CD4-positive, alpha-beta T cell (primary cell): ENCODE measurements at regions of chr11 and their contacts with region 1.

Region 1: GRCh38 chr11:798093-798713 is at the start of gene SLC25A22:
- DNase-seq: peak; percentile 62 to 94 (median 81)
- ATAC-seq: peak; percentile 61
- H3K4me3 ChIP-seq: peak within 1 kb of the TSS; percentile 89
- H3K4me3 Mint-ChIP-seq: peak within 1 kb of the TSS; percentile 92
- H3K27ac ChIP-seq: peak within 1 kb of the TSS; percentile 69 to 91
- H3K27ac Mint-ChIP-seq: peak within 1 kb of the TSS; percentile 91
- H3K4me1 ChIP-seq: peaks cover 60% of the 10 kb centered on the region
- H3K4me1 Mint-ChIP-seq: peaks cover 16% of the 10 kb centered on the region
- H3K27me3 ChIP-seq: no peaks in the 10 kb centered on the region
- H3K27me3 Mint-ChIP-seq: no peaks in the 10 kb centered on the region
- CTCF ChIP-seq: peak; percentile 66
- total RNA-seq, gene SLC25A22: 9.1 to 11.1 TPM

Region 2: GRCh38 chr11:535519-536454 is 262.4 kb before region 1 on chr11 and contains the start of gene HRAS:
- CTCF ChIA-PET with region 1: no interaction called
- POLR2A ChIA-PET with region 1: no interaction called
- intact Hi-C with region 1: loop called in 1 of 2 experiments (anchors 5 kb)
- DNase-seq: peak; percentile 89 to 99 (median 96)
- ATAC-seq: peak; percentile 90
- H3K4me3 ChIP-seq: peak within 1 kb of the TSS; percentile 71
- H3K4me3 Mint-ChIP-seq: peak within 1 kb of the TSS; percentile 98
- H3K27ac ChIP-seq: peak within 1 kb of the TSS; percentile 73 to 79
- H3K27ac Mint-ChIP-seq: peak within 1 kb of the TSS; percentile 93
- H3K4me1 ChIP-seq: peaks cover 44% of the 10 kb centered on the region
- H3K4me1 Mint-ChIP-seq: peaks cover 16% of the 10 kb centered on the region
- H3K27me3 ChIP-seq: no peaks in the 10 kb centered on the region
- H3K27me3 Mint-ChIP-seq: no peaks in the 10 kb centered on the region
- CTCF ChIP-seq: no peak
- total RNA-seq, gene HRAS: 23.7 to 23.9 TPM

Region 3: DNA sequence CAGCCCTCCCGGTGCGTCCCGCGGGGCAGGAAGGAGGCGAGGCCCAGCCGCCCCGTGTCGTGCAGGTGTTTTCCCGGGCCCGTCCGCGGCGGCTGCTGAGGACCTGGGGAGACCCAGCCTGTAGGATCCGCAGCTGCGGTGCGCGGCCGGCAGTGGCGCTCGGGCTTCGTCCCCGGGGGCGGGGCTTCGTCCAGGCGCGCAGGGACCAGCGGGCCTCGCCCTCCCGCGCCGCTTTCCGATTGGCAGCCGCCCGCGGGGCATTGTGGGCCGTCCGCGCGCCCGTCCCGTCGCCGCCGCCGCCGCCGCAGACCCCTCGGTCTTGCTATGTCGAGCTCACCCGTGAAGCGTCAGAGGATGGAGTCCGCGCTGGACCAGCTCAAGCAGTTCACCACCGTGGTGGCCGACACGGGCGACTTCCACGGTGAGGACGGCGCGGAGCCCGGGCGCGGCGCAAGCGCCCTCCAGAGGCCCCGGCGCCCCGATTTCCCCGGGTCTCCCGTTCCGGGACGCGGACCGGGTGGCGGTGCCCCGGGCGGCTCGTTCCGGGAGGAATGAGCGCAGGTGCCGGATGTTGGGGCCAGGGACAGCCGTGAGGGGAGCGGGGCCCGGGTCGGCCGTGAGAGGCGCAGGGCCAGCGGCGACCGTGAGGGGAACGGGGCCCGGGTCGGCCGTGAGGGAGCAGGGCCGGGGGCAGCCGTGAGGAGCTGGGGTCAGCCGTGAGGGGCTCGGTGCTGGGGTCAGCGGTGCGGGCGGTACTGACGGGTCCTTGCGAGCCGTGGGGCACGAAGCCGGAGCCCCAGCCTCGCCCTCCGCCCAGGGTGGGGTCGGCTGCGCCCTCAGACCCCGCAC is 50.8 kb before region 1 on chr11 and contains the start of gene TALDO1:
- CTCF ChIA-PET with region 1: interaction called, 4 read pairs
- POLR2A ChIA-PET with region 1: no interaction called
- intact Hi-C with region 1: loop called (anchors 5 kb)
- DNase-seq: peak; percentile 39 to 91 (median 75)
- ATAC-seq: peak; percentile 79
- H3K4me3 ChIP-seq: peak within 1 kb of the TSS; percentile 63
- H3K4me3 Mint-ChIP-seq: peak within 1 kb of the TSS; percentile 91
- H3K27ac ChIP-seq: peak within 1 kb of the TSS in 1 of 2 donors; percentile 46
- H3K27ac Mint-ChIP-seq: peak within 1 kb of the TSS; percentile 78
- H3K4me1 ChIP-seq: peaks cover 23% of the 10 kb centered on the region
- H3K4me1 Mint-ChIP-seq: peaks cover 18% of the 10 kb centered on the region
- H3K27me3 ChIP-seq: no peaks in the 10 kb centered on the region
- H3K27me3 Mint-ChIP-seq: no peaks in the 10 kb centered on the region
- CTCF ChIP-seq: peak; percentile 23
- total RNA-seq, gene TALDO1: 26.2 to 27.7 TPM

Region 4: DNA sequence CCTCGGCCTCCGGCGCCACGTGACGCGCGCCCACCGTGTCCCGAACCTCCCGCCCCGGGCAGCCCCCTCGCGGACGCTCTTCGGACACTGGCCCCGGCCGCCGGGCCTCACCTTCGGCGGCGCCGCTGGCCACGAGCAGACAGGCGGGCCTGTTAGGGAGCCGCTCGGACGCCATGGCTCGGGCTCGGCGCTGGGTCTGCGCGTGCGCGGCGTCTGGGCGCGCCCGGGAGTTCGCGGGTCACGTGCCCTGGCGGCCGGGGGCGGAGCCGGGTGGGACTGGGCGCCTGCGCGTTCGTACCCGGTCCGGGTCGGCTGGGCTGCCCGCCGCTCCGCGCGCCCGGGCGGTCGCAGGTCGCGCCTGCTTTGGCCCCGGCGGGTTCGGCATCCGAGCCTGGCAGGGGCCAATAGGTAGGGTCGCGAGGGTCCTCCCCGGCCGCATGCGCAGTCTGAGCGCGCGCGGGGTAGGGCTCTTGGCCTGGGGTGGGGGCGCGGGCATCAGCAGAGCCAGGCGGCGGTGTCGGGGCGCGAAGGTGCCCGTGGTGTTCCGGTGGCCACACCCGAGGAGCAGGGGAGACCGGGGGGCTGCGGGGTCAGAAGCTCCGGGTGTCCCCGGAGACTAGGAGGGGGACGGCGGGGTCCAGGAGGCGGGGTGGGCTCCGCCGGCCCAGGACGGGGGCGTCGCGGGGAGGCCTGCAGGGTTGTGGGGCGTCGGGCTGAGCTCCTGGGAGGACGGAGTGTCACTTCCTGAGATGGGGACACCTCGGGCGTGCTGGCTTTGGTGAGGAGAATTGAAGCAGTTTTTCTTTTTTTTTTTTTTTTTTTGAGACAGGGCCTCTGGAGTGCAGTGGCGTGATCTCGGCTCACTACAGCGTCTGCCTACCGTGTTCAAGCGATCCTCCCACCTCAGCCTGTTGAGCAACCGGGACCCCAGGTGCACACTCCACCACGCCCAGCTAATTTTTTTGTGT is 20.6 kb before region 1 on chr11 and contains the start of gene GATD1:
- CTCF ChIA-PET with region 1: no interaction called
- POLR2A ChIA-PET with region 1: interaction called, 6 read pairs
- intact Hi-C with region 1: loop called (anchors 2 kb)
- DNase-seq: peak; percentile 85 to 96 (median 93)
- ATAC-seq: peak; percentile 87
- H3K4me3 ChIP-seq: peak within 1 kb of the TSS; percentile 67
- H3K4me3 Mint-ChIP-seq: peak within 1 kb of the TSS; percentile 90
- H3K27ac ChIP-seq: peak within 1 kb of the TSS in 1 of 2 donors; percentile 56
- H3K27ac Mint-ChIP-seq: peak within 1 kb of the TSS; percentile 77
- H3K4me1 ChIP-seq: peaks cover 48% of the 10 kb centered on the region
- H3K4me1 Mint-ChIP-seq: peaks cover 11% of the 10 kb centered on the region
- H3K27me3 ChIP-seq: no peaks in the 10 kb centered on the region
- H3K27me3 Mint-ChIP-seq: no peaks in the 10 kb centered on the region
- CTCF ChIP-seq: no peak
- total RNA-seq, gene GATD1: 14.7 to 16.1 TPM

Region 5: GRCh38 chr11:809287-810039 is 11.3 kb after region 1 on chr11 and contains the start of gene RPLP2:
- CTCF ChIA-PET with region 1: no interaction called
- POLR2A ChIA-PET with region 1: interaction called, 24 read pairs
- intact Hi-C with region 1: loop called in 1 of 2 experiments (anchors 1 kb)
- DNase-seq: peak; percentile 93 to 99 (median 97)
- ATAC-seq: peak; percentile 82
- H3K4me3 ChIP-seq: peak within 1 kb of the TSS; percentile 92
- H3K4me3 Mint-ChIP-seq: peak within 1 kb of the TSS; percentile 95
- H3K27ac ChIP-seq: peak within 1 kb of the TSS; percentile 95 to 99
- H3K27ac Mint-ChIP-seq: peak within 1 kb of the TSS; percentile 99
- H3K4me1 ChIP-seq: peaks cover 42% of the 10 kb centered on the region
- H3K4me1 Mint-ChIP-seq: peaks cover 35% of the 10 kb centered on the region
- H3K27me3 ChIP-seq: no peaks in the 10 kb centered on the region
- H3K27me3 Mint-ChIP-seq: no peaks in the 10 kb centered on the region
- CTCF ChIP-seq: no peak
- total RNA-seq, gene RPLP2: 5,234 to 5,390 TPM

Region 6: DNA sequence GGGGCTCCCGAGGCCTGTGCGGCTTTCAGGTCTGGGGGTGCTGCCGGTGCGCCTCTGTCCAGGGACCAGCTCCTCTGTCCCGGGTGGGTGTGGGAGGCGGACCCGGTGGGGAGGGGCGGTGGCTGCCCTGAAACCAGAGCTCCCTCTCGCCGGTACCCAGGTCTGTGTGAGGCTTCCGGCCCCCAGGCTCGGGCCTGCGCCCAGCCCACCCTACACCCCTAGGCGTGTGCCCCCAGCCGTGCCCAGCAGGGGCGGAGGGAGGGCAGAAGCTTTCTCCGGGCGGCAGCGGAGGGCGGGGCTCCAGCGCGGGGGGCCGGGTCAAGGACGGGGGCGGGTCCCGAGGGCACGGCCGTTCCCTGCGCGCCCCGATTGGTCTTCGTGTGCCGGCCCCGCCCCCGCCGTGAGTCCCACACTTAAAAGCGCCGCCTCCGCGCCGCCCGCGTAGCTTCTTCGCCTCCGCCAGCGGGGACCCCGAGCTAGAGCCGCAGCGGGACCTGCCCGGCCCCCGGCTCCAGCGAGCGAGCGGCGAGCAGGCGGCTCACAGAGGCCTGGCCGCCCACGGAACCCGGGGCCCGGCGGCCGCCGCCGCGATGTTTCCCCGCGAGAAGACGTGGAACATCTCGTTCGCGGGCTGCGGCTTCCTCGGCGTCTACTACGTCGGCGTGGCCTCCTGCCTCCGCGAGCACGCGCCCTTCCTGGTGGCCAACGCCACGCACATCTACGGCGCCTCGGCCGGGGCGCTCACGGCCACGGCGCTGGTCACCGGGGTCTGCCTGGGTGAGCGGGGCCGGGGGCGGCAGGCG is 21.1 kb after region 1 on chr11:
- CTCF ChIA-PET with region 1: no interaction called
- POLR2A ChIA-PET with region 1: interaction called, 31 read pairs
- intact Hi-C with region 1: no loop called
- DNase-seq: peak; percentile 83 to 96 (median 92)
- ATAC-seq: peak; percentile 71
- H3K4me3 ChIP-seq: peak overlapping the region; percentile 74
- H3K4me3 Mint-ChIP-seq: peak overlapping the region; percentile 97
- H3K27ac ChIP-seq: peak overlapping the region; percentile 62 to 88
- H3K27ac Mint-ChIP-seq: peak overlapping the region; percentile 92
- H3K4me1 ChIP-seq: peaks cover 34% of the 10 kb centered on the region
- H3K4me1 Mint-ChIP-seq: peaks cover 11% of the 10 kb centered on the region
- H3K27me3 ChIP-seq: no peaks in the 10 kb centered on the region
- H3K27me3 Mint-ChIP-seq: no peaks in the 10 kb centered on the region
- CTCF ChIP-seq: peak; percentile 21

Region 7: GRCh38 chr11:1502954-1503707 is 704.9 kb after region 1 on chr11:
- CTCF ChIA-PET with region 1: no interaction called
- POLR2A ChIA-PET with region 1: no interaction called
- intact Hi-C with region 1: no loop called
- DNase-seq: no peak
- ATAC-seq: no peak
- H3K4me3 ChIP-seq: no peak overlapping the region
- H3K4me3 Mint-ChIP-seq: no peak overlapping the region
- H3K27ac ChIP-seq: no peak overlapping the region
- H3K27ac Mint-ChIP-seq: no peak overlapping the region
- H3K4me1 ChIP-seq: peaks cover 36% of the 10 kb centered on the region
- H3K4me1 Mint-ChIP-seq: peaks cover 43% of the 10 kb centered on the region
- H3K27me3 ChIP-seq: no peaks in the 10 kb centered on the region
- H3K27me3 Mint-ChIP-seq: no peaks in the 10 kb centered on the region
- CTCF ChIP-seq: no peak